Activated CD4-positive, alpha-beta T cell treated with anti-CD3 and anti-CD28 coated beads for 36 hours (primary cell): ENCODE measurements at regions of chr6 and their contacts with region 1.

Region 1: DNA sequence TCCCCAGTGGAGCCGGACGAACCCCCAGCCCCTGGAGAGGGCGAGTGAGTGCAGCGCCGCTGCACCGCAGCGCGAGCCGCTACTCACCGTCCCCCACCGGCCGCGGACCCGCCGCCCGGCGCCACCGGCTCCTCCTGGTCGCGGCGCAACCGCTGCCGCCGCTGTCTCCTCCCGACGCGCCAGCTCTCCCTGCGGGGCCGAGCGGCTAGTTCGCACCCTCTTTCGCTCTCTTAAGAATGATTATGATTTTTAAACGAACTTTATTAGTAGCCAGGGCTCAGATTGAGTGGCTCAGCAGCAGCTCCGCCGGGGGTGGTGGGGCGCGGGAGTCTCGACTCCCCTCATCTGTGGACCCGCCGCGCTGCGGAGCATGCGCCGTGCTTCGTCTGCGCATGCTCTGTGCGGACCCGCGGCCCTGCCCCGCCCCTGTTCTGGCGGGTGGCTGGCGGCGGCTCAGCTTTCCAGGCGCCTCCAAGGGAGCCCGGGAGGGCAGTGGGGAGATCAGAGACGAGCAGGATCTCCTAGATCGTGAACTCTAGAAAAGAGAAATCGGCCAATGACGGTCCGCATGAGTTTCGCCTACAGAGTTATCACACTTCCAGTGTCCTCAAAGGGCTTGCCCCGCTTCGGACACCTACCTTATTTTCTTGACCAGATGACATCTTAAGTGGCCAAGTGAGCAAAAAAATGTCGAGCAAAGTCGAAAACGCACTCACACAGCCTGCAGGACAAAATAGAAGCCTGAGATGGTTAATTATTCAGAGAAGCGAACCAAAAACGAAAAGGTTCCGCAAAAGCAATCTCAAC is at the start of gene RAB23:
- DNase-seq: peak; percentile 88
- ATAC-seq: peak; percentile 93
- H3K4me3 Mint-ChIP-seq: peak within 1 kb of the TSS; percentile 92
- H3K27ac Mint-ChIP-seq: peak within 1 kb of the TSS; percentile 93
- H3K4me1 Mint-ChIP-seq: peaks cover 16% of the 10 kb centered on the region
- H3K27me3 Mint-ChIP-seq: peaks cover 4% of the 10 kb centered on the region
- total RNA-seq, gene RAB23: 1.4 to 1.5 TPM

Region 2: DNA sequence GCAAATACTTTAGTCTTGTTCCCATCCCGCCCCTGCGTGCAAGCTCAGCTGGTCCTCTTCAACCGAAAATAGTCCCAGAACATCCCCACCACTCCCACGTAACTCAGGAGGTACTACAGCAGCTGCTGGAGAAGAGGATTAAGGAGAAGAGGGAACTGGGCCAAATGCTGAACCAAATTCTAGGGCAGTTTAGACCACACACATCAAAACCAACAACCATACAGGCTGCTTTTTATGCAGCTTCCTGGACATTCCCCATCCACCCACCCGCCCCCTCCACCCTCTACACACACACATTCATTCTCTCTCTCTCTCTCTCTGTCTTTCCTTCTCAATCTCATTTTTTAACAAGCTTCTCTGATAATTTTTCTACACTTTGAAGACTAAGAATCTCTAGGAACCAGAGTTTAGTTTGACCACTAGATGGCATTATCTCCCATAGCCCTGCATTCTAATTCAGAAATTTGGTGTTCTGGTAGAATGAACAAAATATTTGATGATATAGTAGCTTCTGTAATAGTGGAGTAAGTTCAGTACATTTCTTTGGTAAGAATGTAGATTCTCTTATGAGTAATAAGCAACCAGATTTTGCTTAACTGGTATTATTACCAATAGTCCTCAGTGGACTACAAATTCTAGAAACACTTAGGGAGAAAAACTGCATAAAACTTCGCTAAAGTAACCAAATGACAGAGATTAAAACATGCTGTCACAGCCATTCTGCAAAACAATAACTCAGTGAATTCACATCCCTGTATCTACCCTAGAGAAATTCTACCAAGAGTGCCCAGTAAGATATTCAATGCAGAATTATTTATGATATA is 319.3 kb before region 1 on chr6:
- CTCF ChIA-PET with region 1: interaction called, 3 read pairs
- POLR2A ChIA-PET with region 1: no interaction called
- intact Hi-C with region 1: loop called in 1 of 2 experiments (anchors 2 kb)
- DNase-seq: no peak
- ATAC-seq: no peak
- H3K4me3 Mint-ChIP-seq: no peak overlapping the region
- H3K27ac Mint-ChIP-seq: no peak overlapping the region
- H3K4me1 Mint-ChIP-seq: no peaks in the 10 kb centered on the region
- H3K27me3 Mint-ChIP-seq: peaks cover 9% of the 10 kb centered on the region

Region 3: DNA sequence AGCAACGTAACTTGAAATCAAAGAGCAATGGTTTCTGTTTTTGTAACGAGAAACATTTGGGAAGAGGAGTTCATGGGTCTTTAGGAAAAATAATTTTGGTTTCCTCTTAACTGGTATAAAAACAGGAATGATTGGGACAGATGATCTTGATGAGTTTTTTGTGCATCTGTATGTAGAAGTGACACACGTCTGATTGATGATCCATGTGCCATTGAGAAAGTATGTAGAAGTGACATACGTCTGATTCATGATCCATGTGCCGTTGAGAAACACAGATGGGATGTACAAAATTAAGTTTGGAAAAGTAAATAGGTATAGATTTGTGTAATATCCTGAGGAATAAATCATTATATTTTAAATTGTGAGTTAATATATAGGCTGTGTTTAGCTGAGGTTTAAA is 173.6 kb before region 1 on chr6:
- CTCF ChIA-PET with region 1: no interaction called
- POLR2A ChIA-PET with region 1: no interaction called
- intact Hi-C with region 1: loop called in 1 of 2 experiments (anchors 5 kb)
- DNase-seq: no peak
- ATAC-seq: no peak
- H3K4me3 Mint-ChIP-seq: peak overlapping the region; percentile 63
- H3K27ac Mint-ChIP-seq: peak overlapping the region; percentile 40
- H3K4me1 Mint-ChIP-seq: peaks cover 28% of the 10 kb centered on the region
- H3K27me3 Mint-ChIP-seq: peaks cover 9% of the 10 kb centered on the region

Region 4: DNA sequence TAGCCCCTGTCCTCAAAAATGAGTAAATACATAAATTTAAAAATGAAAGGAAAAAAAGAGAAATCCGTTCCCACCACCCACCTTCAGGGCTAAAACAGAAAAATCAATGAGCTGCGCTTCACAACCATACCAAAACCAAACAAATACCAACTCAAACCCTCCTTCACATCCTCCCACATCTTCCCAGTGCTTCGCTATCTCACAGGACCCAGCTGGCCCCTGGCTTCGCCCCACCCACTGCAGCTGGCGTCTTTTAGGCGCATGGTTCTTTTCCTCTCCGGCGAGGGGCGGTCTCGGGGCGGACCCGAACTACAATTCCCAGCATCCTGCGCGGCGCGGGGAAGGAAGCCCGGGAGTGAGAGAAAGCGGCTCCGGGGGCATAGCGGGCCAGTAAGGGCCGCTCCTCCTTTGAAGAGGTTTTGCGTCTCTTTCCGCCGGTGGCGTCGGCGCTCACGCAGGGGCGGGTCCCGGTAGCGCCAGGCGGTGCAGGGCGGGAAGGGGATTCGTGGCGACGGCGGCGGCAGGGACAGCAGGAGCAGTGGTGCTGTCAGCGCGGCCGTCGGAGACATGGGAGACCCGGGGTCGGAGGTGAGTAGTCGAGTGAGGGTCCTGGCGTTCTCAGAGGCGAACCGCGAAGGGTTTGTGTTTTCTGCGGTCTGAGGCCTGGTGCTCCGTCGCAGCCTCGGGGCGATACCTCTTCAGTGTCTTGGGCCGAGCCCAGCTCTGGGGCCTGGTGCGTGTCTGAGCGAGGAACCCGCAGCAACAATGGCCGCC is 132.3 kb before region 1 on chr6 and contains the start of gene ZNF451:
- CTCF ChIA-PET with region 1: no interaction called
- POLR2A ChIA-PET with region 1: no interaction called
- intact Hi-C with region 1: loop called (anchors 1 kb)
- DNase-seq: peak; percentile 98
- ATAC-seq: peak; percentile 95
- H3K4me3 Mint-ChIP-seq: peak within 1 kb of the TSS; percentile 73
- H3K27ac Mint-ChIP-seq: peak within 1 kb of the TSS; percentile 82
- H3K4me1 Mint-ChIP-seq: peaks cover 32% of the 10 kb centered on the region
- H3K27me3 Mint-ChIP-seq: no peaks in the 10 kb centered on the region
- total RNA-seq, gene ZNF451: 46.8 to 60.3 TPM

Region 5: GRCh38 chr6:57172136-57173055 is 49.7 kb before region 1 on chr6 and contains the start of gene BAG2:
- CTCF ChIA-PET with region 1: no interaction called
- POLR2A ChIA-PET with region 1: interaction called, 5 read pairs
- intact Hi-C with region 1: loop called (anchors 1 kb)
- DNase-seq: peak; percentile 94
- ATAC-seq: peak; percentile 89
- H3K4me3 Mint-ChIP-seq: peak within 1 kb of the TSS; percentile 87
- H3K27ac Mint-ChIP-seq: peak within 1 kb of the TSS; percentile 96
- H3K4me1 Mint-ChIP-seq: peaks cover 35% of the 10 kb centered on the region
- H3K27me3 Mint-ChIP-seq: no peaks in the 10 kb centered on the region
- total RNA-seq, gene BAG2: 8.2 to 8.8 TPM

Region 6: GRCh38 chr6:57267586-57268293 is 45.6 kb after region 1 on chr6:
- CTCF ChIA-PET with region 1: interaction called, 3 read pairs
- POLR2A ChIA-PET with region 1: no interaction called
- intact Hi-C with region 1: loop called (anchors 1 to 5 kb)
- DNase-seq: peak; percentile 62
- ATAC-seq: peak; percentile 52
- H3K4me3 Mint-ChIP-seq: no peak overlapping the region
- H3K27ac Mint-ChIP-seq: no peak overlapping the region
- H3K4me1 Mint-ChIP-seq: peaks cover 27% of the 10 kb centered on the region
- H3K27me3 Mint-ChIP-seq: peaks cover 14% of the 10 kb centered on the region